ENCODE measurements at regions of chr19 and their contacts with region 1.

Region 1: GRCh38 chr19:17419621-17420466 is at the start of gene MVB12A:
- H3K4me3 Mint-ChIP-seq: peak within 1 kb of the TSS; percentile 87
- H3K27ac Mint-ChIP-seq: peak within 1 kb of the TSS; percentile 89
- H3K4me1 Mint-ChIP-seq: peaks cover 39% of the 10 kb centered on the region
- H3K27me3 Mint-ChIP-seq: no peaks in the 10 kb centered on the region

Region 2: DNA sequence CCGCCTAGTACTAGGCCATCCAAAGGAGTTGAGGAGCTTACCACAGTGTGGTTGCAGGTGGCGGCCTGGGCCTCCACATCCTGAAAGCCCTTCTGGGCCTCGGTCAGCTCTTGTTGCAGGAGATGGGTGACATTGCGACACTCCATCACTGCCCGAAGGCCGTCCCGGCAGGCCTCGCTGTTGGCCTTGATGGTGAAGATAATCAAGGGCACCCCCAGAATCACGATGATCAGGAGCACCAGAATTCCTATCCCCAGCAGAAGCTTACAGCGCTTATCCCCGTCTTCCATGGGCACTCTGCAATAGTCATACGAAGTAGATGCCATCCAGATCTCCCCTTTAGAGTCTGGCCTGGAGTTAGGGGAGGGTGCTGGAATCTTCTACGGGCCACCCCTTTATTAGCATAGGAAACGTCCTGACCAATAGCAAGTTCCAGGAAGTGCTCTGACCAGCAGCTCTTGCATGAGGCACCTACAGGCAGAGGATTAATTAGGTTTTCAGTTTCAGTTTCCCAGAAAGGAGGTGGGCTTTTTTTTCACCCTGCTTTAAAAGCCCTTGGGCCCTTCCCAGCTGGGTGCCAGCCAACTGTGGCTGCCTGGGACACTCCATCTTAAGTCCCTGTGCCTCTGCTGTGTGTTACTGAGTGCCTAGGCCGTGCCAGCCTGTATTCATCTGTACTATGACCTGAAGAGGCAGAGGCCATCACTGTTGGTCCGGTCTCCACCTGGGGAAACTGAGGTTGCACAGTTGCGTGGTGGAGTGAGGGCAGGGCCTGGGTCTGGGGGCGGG is 14.4 kb before region 1 on chr19 and contains the start of gene BST2:
- intact Hi-C with region 1: loop called (anchors 1 kb)
- H3K4me3 Mint-ChIP-seq: peak within 1 kb of the TSS; percentile 80
- H3K27ac Mint-ChIP-seq: peak within 1 kb of the TSS; percentile 92
- H3K4me1 Mint-ChIP-seq: peaks cover 48% of the 10 kb centered on the region
- H3K27me3 Mint-ChIP-seq: no peaks in the 10 kb centered on the region

Region 3: GRCh38 chr19:17496337-17496997 is 76.6 kb after region 1 on chr19:
- intact Hi-C with region 1: no loop called
- H3K4me3 Mint-ChIP-seq: no peak overlapping the region
- H3K27ac Mint-ChIP-seq: no peak overlapping the region
- H3K4me1 Mint-ChIP-seq: peaks cover 47% of the 10 kb centered on the region
- H3K27me3 Mint-ChIP-seq: no peaks in the 10 kb centered on the region